AG04449 (cell line): ENCODE measurements at regions of chr6 and their contacts with region 1.

Region 1: DNA sequence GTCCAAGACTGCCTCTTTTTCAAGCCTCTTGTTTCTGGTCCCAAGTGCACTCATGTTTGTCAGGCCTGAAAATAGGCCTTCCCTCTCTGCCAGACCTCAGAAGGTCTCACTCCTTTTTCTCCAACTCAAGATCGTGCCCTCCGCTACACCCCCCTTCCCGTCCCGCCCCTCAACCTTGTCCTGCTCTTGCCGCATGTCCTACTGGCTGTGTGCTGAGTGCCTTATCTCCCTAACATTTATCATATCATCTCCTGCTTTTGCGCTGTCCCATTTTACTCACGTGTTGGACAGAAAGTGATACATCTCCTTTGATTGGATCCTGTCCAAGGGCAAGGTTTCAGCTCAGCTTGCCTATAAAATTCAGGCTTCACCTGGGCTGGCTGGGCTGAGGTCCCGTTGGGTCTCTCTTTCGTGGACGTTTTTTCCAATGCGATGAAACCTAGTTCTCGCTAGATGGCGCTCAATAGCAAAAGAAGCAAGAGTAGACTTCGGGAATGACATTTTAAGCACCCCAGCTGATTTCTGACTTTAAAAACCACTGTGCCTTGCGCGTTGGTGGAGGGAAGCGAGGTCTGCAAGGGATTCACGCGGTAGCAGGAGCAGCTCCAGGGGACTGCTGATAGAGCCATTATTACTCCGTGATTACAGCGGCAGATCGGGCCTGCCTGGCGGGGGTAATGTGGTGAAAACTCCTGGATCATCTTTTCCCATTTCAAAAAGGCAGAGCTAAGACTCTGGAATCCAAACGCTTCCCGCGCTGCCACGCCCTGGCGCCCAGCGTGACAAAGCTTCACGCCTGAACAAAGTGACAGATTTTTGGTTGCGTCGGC is 137.6 kb downstream of the IMPG1 start:
- DNase-seq: peak; percentile 24
- H3K4me3 ChIP-seq: peak overlapping the region; percentile 60
- CTCF ChIP-seq: peak; percentile 69

Region 2: GRCh38 chr6:75913040-75913439 is 21.8 kb before region 1 on chr6:
- CTCF ChIA-PET with region 1: interaction called, 11 read pairs
- POLR2A ChIA-PET with region 1: no interaction called
- DNase-seq: no peak
- H3K4me3 ChIP-seq: no peak overlapping the region
- CTCF ChIP-seq: no peak

Region 3: GRCh38 chr6:75952128-75952527 is 17.3 kb after region 1 on chr6:
- CTCF ChIA-PET with region 1: interaction called, 11 read pairs
- POLR2A ChIA-PET with region 1: no interaction called
- DNase-seq: no peak
- H3K4me3 ChIP-seq: no peak overlapping the region
- CTCF ChIP-seq: no peak

Region 4: DNA sequence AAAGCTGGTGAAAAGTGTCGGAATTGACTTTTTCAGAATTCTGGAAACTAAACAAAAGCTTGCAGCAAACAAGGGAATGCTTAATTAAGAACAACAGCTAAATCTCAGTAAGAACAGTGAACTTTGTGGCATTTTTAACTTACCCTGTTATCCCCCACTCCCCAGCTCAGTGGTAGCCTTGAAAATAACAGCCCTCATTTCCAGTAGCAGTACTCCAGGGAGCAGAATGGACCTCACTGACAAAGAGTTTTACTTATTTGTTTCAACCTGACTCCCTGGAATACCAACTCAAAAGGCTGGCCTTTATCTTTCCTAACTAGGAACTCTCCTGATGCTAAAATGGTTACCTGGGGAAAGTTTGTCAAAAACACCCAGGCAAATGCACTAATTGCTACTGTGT is 28.7 kb after region 1 on chr6:
- CTCF ChIA-PET with region 1: no interaction called
- POLR2A ChIA-PET with region 1: no interaction called
- DNase-seq: no peak
- H3K4me3 ChIP-seq: no peak overlapping the region
- CTCF ChIP-seq: no peak

Region 5: GRCh38 chr6:77457720-77458349 is 1523.0 kb after region 1 on chr6:
- CTCF ChIA-PET with region 1: interaction called, 59 read pairs
- POLR2A ChIA-PET with region 1: no interaction called
- DNase-seq: peak; percentile 80
- H3K4me3 ChIP-seq: no peak overlapping the region
- CTCF ChIP-seq: peak; percentile 71

Region 6: DNA sequence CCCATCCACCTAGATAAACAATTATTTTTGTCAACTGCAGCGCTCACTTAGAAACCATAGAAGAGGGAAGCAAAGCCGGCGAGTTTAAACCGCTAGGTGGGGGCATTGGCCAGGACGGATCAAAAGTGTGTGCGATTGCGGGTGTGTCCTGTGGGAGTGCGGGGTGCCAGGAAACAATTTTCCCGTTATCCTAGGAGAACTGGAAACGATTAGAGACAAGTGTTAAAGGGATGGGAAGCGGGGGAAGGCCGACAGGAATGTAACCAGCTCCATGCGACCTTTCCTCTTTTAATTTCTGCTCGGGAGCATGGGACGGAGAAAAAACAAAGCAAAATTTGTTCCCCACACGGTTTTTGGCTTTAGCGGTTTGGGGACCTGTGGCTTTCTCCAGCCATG is 1531.2 kb after region 1 on chr6:
- CTCF ChIA-PET with region 1: interaction called, 28 read pairs
- POLR2A ChIA-PET with region 1: no interaction called
- DNase-seq: no peak
- H3K4me3 ChIP-seq: peak overlapping the region; percentile 66
- CTCF ChIP-seq: peak; percentile 74